ENCODE measurements at regions of chr12 and their contacts with region 1.

Region 1: DNA sequence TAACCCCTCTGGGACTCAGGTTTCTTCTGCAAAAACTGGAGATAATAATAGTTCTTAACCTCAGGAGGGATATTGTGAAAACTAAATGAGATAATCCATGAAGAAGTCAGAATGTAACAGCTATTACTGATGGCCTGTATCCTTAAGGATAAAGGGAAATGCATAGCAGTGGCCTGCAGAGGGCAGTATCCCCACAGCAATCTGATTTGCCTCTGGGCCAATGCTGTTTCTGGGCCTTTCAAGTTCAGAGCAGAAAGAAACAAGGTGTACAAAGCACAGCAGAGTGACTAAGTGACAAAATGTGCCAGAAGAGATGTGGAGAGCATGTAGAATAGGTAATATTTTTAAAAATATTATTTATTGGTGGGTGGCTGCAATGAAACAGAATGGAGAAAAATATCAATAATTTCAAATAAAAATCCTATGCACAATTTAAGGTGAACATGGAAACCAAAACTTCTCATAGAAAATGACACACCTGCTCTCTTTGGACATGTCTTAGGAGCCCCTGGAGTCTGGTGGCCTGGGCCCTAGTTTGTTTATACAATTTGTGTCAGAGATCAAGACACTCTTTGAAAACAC is 90.3 kb downstream of the C12orf75 start:
- DNase-seq: peak; percentile 65
- H3K4me3 ChIP-seq: no peak overlapping the region; a peak in 1 of 4 replicates
- H3K27ac ChIP-seq: no peak overlapping the region
- H3K4me1 ChIP-seq: peaks cover 0 to 7% of the 10 kb centered on the region in 2 experiments; a peak in 2 of 4 replicates
- H3K27me3 ChIP-seq: no peaks in the 10 kb centered on the region
- CTCF ChIP-seq: peak; percentile 97
- EP300 ChIP-seq: no peak
- RAD21 ChIP-seq: peak; percentile 99

Region 2: DNA sequence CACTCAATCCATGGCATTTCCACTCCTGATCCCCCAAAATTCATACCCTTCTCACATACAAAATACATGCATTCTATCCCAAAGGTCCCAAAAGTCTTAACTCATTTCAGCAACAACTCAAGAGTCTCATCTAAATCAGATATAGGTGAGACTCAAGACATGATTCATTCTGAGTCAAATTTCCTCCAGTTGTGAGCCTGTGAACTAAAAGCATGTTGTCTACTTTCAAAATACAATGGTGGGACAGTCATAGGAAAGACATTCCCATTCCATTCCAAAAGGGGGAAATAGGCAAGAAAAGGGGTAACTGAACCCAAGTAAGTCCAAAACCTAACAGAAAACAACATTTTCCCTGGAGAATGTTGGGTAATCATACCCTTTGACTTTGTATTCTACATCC is 13.1 kb after region 1 on chr12:
- CTCF ChIA-PET with region 1: interaction called, 24 read pairs
- POLR2A ChIA-PET with region 1: no interaction called
- DNase-seq: no peak
- H3K4me3 ChIP-seq: no peak overlapping the region
- H3K27ac ChIP-seq: peak overlapping the region in 1 of 2 experiments; percentile 90; a peak in 2 of 4 replicates
- H3K4me1 ChIP-seq: peaks cover 6 to 8% of the 10 kb centered on the region in 2 experiments; a peak in 3 of 4 replicates
- H3K27me3 ChIP-seq: no peaks in the 10 kb centered on the region
- CTCF ChIP-seq: no peak
- EP300 ChIP-seq: peak in 1 of 2 experiments; percentile 55; a peak in 1 of 4 replicates
- RAD21 ChIP-seq: no peak